ENCODE measurements at regions of chr3 and their contacts with region 1.

Region 1: GRCh38 chr3:97719156-97719821 is 45.3 kb upstream of the ARL6 start:
- DNase-seq: peak; percentile 39 to 40
- ATAC-seq: peak in 6 of 8 donors; percentile 65 to 80 (median 70)
- H3K4me3 ChIP-seq: no peak overlapping the region
- H3K27ac ChIP-seq: no peak overlapping the region
- H3K4me1 ChIP-seq: no peaks in the 10 kb centered on the region
- H3K27me3 ChIP-seq: no peaks in the 10 kb centered on the region
- CTCF ChIP-seq: peak; percentile 62 to 94 (median 89)

Region 2: DNA sequence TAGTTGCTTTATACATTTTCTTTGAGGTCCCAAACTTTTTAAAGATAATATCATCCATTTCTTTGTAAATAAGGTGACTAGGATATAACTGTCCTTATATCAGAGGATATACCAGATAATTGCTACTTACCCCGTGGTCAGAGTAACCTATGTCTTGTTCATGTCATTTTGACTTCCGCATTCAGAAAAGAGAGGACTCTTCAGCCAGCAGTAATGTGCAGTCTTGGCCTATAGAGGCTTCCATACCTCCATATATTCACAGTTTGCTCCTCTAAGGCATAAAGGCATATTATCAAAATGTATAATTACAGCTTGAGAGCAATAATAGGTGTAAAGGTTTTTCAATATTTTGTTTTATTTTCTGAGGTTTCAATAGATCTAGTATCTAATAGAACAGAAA is 866.4 kb before region 1 on chr3:
- intact Hi-C with region 1: loop called in 1 of 10 experiments (anchors 10 kb)
- DNase-seq: no peak
- ATAC-seq: no peak
- H3K4me3 ChIP-seq: no peak overlapping the region
- H3K27ac ChIP-seq: no peak overlapping the region
- H3K4me1 ChIP-seq: no peaks in the 10 kb centered on the region
- H3K27me3 ChIP-seq: no peaks in the 10 kb centered on the region
- CTCF ChIP-seq: no peak

Region 3: GRCh38 chr3:96863129-96863740 is 856.1 kb before region 1 on chr3:
- intact Hi-C with region 1: loop called in 3 of 10 experiments (anchors 5 to 10 kb)
- DNase-seq: no peak
- ATAC-seq: no peak
- H3K4me3 ChIP-seq: no peak overlapping the region
- H3K27ac ChIP-seq: no peak overlapping the region
- H3K4me1 ChIP-seq: no peaks in the 10 kb centered on the region
- H3K27me3 ChIP-seq: no peaks in the 10 kb centered on the region
- CTCF ChIP-seq: peak; percentile 14 to 67 (median 55)

Measured in heart right ventricle (tissue), 16 donors.